Transverse colon (tissue), 4 donors: ENCODE measurements at regions of chr12 and their contacts with region 1.

Region 1: GRCh38 chr12:113422030-113422885 is at the start of gene SDSL:
- DNase-seq: peak; percentile 74
- H3K4me3 ChIP-seq: peak within 1 kb of the TSS; percentile 32 to 59 (median 44)
- H3K27ac ChIP-seq: peak within 1 kb of the TSS; percentile 66 to 75 (median 74)
- H3K4me1 ChIP-seq: peaks cover 0 to 22% (median 2%) of the 10 kb centered on the region in 4 donors
- H3K27me3 ChIP-seq: no peaks in the 10 kb centered on the region
- CTCF ChIP-seq: no peak
- EP300 ChIP-seq: no peak
- POLR2A ChIP-seq: peak; percentile 56
- total RNA-seq, gene SDSL: 7.4 to 16.8 (median 13.1) TPM

Region 2: GRCh38 chr12:113310489-113310888 is 111.8 kb before region 1 on chr12:
- in situ Hi-C with region 1: loop called in 1 of 4 experiments (anchors 10 kb)
- intact Hi-C with region 1: no loop called
- DNase-seq: no peak
- H3K4me3 ChIP-seq: no peak overlapping the region
- H3K27ac ChIP-seq: no peak overlapping the region
- H3K4me1 ChIP-seq: no peaks in the 10 kb centered on the region
- H3K27me3 ChIP-seq: no peaks in the 10 kb centered on the region
- CTCF ChIP-seq: no peak
- EP300 ChIP-seq: no peak
- POLR2A ChIP-seq: no peak

Region 3: DNA sequence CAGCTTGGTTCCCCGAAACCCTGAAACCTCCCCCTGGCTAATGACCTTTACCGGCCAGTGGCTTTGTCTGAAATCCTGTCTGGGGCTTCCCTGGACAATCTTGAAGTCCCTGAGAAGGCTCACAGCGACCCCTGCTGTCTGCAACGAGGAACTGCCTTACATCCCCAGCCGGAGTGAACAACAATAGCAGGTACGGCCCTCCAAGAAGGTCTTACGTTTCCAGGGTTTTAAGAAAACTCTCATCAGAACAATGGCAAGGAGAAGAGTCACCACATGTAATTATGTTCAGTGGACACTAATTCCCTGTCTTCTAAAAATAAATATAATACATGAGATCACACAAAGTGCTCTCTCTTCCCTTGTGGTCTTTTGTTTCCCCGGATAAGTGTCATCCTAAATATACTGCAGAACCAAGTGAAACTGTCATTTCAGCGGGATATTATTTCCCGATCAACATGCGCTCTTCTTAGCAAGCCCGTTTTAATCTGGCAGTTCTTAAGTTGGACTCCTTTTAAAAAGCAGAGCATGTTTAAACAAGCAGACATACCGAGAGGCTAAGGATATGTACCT is 490.6 kb after region 1 on chr12:
- in situ Hi-C with region 1: loop called in 2 of 4 experiments (anchors 25 kb)
- intact Hi-C with region 1: no loop called
- DNase-seq: peak; percentile 58
- H3K4me3 ChIP-seq: no peak overlapping the region
- H3K27ac ChIP-seq: no peak overlapping the region
- H3K4me1 ChIP-seq: no peaks in the 10 kb centered on the region
- H3K27me3 ChIP-seq: no peaks in the 10 kb centered on the region
- CTCF ChIP-seq: peak; percentile 71 to 83 (median 77)
- EP300 ChIP-seq: no peak
- POLR2A ChIP-seq: no peak